ENCODE measurements at regions of chr21 and their contacts with region 1.

Region 1: DNA sequence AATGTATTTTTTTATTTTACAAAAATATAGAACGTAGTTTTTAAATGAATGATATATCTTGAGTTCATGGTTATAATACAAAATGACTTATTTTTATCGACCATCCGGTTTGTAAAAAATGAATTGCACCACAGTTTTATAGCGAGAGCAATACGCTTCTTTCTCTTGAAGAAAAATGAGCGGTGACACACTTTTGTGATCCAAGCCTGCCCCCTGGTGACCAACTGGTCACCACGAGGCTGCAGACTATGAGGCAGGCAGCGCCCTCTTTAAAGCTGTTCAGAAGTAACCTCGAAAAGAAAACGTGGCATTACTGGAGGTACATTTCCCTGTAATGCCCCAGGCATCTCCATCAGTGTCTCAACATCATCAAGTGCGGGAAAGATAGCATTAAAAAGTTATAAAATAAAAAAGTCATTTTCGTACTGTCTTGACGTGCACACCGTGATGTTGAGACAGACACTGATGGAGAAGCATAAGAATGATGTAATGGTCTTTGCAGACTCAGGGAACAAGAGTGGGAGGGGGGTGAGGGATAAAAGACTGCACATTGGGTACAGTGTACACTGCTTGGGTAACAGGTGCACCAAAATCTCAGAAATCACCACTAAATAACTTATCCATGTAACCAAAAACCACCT is 734.2 kb upstream of the ADAMTS5 start:
- H3K4me3 Mint-ChIP-seq: no peak overlapping the region
- H3K27ac Mint-ChIP-seq: no peak overlapping the region
- H3K4me1 Mint-ChIP-seq: no peaks in the 10 kb centered on the region
- H3K27me3 Mint-ChIP-seq: no peaks in the 10 kb centered on the region

Region 2: GRCh38 chr21:26769613-26770188 is 931.4 kb before region 1 on chr21:
- intact Hi-C with region 1: loop called (anchors 5 kb)
- H3K4me3 Mint-ChIP-seq: no peak overlapping the region
- H3K27ac Mint-ChIP-seq: no peak overlapping the region
- H3K4me1 Mint-ChIP-seq: no peaks in the 10 kb centered on the region
- H3K27me3 Mint-ChIP-seq: no peaks in the 10 kb centered on the region

Region 3: GRCh38 chr21:26850108-26850643 is 850.9 kb before region 1 on chr21:
- intact Hi-C with region 1: loop called (anchors 1 kb)
- H3K4me3 Mint-ChIP-seq: no peak overlapping the region
- H3K27ac Mint-ChIP-seq: no peak overlapping the region
- H3K4me1 Mint-ChIP-seq: peaks cover 22% of the 10 kb centered on the region
- H3K27me3 Mint-ChIP-seq: peaks cover 32% of the 10 kb centered on the region